Naive thymus-derived CD4-positive, alpha-beta T cell (primary cell): ENCODE measurements at regions of chr17 and their contacts with region 1.

Region 1: DNA sequence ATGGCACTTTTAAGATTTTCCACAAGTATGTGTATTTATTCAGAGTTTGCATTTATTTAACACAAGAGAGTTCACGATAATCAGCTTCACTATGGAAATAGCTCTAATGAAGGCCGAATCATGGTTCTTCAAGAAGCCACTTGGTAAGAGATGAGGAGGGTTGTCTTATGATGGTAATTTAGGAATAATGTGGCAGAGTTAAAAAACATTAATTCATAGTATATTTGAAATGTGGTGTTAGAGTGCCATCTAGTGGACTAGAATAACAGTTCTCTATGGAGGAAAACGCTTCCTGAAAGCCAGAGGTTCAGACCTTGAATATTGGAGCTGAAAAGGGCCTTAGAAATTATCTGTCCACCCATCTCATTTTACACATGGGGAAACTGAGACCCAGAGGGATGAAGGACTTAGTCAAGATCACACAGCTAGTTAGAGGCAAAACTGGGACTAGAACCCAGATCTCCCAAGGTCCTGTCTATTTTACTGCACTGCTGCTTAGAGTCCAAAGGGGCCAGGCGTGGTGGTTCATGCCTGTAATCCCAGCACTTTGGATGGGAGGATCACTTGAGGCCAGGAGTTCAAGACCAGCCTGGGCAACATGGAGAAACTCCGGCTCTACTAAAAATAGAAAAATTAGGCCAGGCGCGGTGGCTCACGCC is 33.8 kb upstream of the KPNB1 start:
- DNase-seq: peak in 7 of 9 donors; percentile 17 to 59 (median 44)
- ATAC-seq: peak; percentile 51
- H3K4me3 ChIP-seq: no peak overlapping the region
- H3K4me3 Mint-ChIP-seq: no peak overlapping the region
- H3K27ac ChIP-seq: no peak overlapping the region
- H3K27ac Mint-ChIP-seq: peak overlapping the region in 6 of 9 donors; percentile 19 to 81 (median 52)
- H3K4me1 ChIP-seq: no peaks in the 10 kb centered on the region
- H3K4me1 Mint-ChIP-seq: peaks cover 0 to 14% (median 5%) of the 10 kb centered on the region in 7 donors
- H3K27me3 ChIP-seq: no peaks in the 10 kb centered on the region
- H3K27me3 Mint-ChIP-seq: no peaks in the 10 kb centered on the region

Region 2: DNA sequence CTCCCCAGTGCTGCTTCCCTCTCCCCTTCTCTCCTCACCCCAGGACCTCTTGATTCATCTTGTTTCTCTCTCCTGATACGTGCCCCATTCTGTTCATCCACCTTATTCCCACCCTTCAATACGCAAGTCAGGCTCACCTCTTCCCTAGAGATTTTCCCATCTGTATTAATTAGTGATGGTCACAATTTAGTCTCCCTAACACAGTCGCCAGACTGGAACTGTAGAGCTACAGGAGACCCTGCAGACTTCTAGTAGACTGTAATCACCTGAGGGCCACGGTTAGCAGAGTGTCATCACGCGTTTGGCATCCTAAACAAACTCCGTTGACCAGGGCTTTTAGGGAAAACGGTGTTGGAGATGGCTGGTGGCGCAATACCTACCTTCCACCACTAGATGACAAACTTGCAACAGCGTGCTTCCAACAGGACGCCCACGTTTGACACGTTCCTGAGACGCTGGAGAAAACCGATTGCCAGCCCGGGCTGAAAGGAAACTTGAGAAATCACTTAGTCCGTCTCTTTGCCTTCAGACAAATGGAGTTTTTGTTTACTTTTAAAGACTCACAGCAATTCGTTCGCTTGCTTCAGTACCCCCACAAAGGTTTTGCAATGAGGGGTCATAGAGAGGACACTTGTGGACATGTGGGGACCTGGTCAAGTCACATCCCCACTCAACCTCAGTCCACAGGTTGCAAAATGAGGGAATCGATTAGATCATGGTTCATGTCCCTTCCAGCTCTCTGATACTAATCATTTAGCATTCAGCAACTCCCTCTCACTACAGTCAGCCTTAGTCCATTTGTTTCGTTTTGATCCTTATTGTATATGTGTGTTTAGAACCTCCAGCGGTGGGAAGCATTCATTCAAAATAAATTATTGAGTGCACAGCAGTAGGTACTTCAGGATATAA is 386.1 kb before region 1 on chr17:
- CTCF ChIA-PET with region 1: interaction called, 8 read pairs
- POLR2A ChIA-PET with region 1: no interaction called
- intact Hi-C with region 1: loop called in 1 of 2 experiments (anchors 10 kb)
- DNase-seq: peak; percentile 33 to 67 (median 61)
- ATAC-seq: peak; percentile 93
- H3K4me3 ChIP-seq: peak overlapping the region; percentile 22
- H3K4me3 Mint-ChIP-seq: peak overlapping the region; percentile 50 to 75 (median 62)
- H3K27ac ChIP-seq: no peak overlapping the region
- H3K27ac Mint-ChIP-seq: peak overlapping the region in 1 of 9 donors; percentile 32
- H3K4me1 ChIP-seq: peaks cover 0 to 3% of the 10 kb centered on the region in 2 donors
- H3K4me1 Mint-ChIP-seq: peaks cover 6 to 17% (median 11%) of the 10 kb centered on the region in 7 donors
- H3K27me3 ChIP-seq: no peaks in the 10 kb centered on the region
- H3K27me3 Mint-ChIP-seq: peaks cover 0 to 15% (median 7%) of the 10 kb centered on the region in 5 donors

Region 3: DNA sequence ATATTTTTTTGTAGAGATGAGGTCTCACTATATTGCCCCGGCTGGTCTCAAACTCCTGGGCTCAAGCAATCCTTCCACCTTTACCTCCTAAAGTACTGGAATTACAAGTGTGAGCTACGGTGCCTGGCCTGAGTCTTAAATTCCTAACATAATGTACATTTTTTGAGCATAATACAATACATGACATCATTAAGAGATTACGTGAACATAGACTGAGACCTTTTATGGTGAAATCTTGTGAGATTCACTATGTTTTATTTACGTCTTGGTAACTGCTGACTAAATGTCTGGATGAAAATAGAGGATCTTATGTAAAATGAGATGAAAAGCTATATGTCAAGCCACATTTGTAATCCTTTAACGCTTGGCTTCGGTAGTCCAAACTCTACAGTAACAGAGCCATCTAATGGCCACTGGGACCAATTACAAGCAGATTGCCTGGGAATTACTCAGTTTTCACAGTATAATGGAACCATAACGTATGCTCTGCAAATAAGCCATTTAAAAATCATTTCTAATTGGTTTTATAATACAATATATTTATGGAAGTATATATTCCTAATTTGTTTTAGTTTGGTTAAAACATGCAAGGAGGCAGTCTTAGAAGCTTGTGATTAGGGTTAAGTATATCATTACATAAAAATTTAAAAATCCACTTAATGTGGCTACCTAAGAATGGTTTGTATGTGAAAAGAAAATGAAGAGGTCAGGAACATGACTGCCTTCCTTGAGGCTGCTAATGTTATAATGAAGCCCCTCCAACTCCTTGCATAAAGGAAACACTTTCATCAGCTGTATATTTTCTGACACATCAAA is 300.2 kb before region 1 on chr17:
- CTCF ChIA-PET with region 1: interaction called, 3 read pairs
- POLR2A ChIA-PET with region 1: no interaction called
- intact Hi-C with region 1: loop called (anchors 5 kb)
- DNase-seq: peak in 7 of 9 donors; percentile 30 to 56 (median 48)
- ATAC-seq: peak; percentile 90
- H3K4me3 ChIP-seq: no peak overlapping the region
- H3K4me3 Mint-ChIP-seq: no peak overlapping the region
- H3K27ac ChIP-seq: no peak overlapping the region
- H3K27ac Mint-ChIP-seq: no peak overlapping the region
- H3K4me1 ChIP-seq: no peaks in the 10 kb centered on the region
- H3K4me1 Mint-ChIP-seq: peaks cover 0 to 3% (median 0%) of the 10 kb centered on the region in 7 donors
- H3K27me3 ChIP-seq: no peaks in the 10 kb centered on the region
- H3K27me3 Mint-ChIP-seq: peaks cover 0 to 14% (median 0%) of the 10 kb centered on the region in 5 donors

Region 4: GRCh38 chr17:47323382-47324222 is 292.3 kb before region 1 on chr17 and contains the start of gene EFCAB13:
- CTCF ChIA-PET with region 1: no interaction called
- POLR2A ChIA-PET with region 1: no interaction called
- intact Hi-C with region 1: loop called (anchors 5 kb)
- DNase-seq: peak; percentile 55 to 84 (median 73)
- ATAC-seq: peak; percentile 91
- H3K4me3 ChIP-seq: peak within 1 kb of the TSS; percentile 93
- H3K4me3 Mint-ChIP-seq: peak within 1 kb of the TSS; percentile 92 to 100 (median 98)
- H3K27ac ChIP-seq: peak within 1 kb of the TSS; percentile 76
- H3K27ac Mint-ChIP-seq: peak within 1 kb of the TSS; percentile 91 to 99 (median 98)
- H3K4me1 ChIP-seq: peaks cover 0 to 3% of the 10 kb centered on the region in 2 donors
- H3K4me1 Mint-ChIP-seq: peaks cover 13 to 26% (median 22%) of the 10 kb centered on the region in 7 donors
- H3K27me3 ChIP-seq: no peaks in the 10 kb centered on the region
- H3K27me3 Mint-ChIP-seq: peaks cover 0 to 28% (median 0%) of the 10 kb centered on the region in 5 donors
- total RNA-seq, gene EFCAB13: 3.7 to 37.4 (median 19.9) TPM

Region 5: GRCh38 chr17:47363171-47363570 is 252.7 kb before region 1 on chr17:
- CTCF ChIA-PET with region 1: interaction called, 5 read pairs
- POLR2A ChIA-PET with region 1: interaction called, 3 read pairs
- intact Hi-C with region 1: loop called (anchors 1 kb)
- DNase-seq: no peak
- ATAC-seq: no peak
- H3K4me3 ChIP-seq: no peak overlapping the region
- H3K4me3 Mint-ChIP-seq: no peak overlapping the region
- H3K27ac ChIP-seq: no peak overlapping the region
- H3K27ac Mint-ChIP-seq: no peak overlapping the region
- H3K4me1 ChIP-seq: no peaks in the 10 kb centered on the region
- H3K4me1 Mint-ChIP-seq: no peaks in the 10 kb centered on the region
- H3K27me3 ChIP-seq: no peaks in the 10 kb centered on the region
- H3K27me3 Mint-ChIP-seq: peaks cover 0 to 9% (median 0%) of the 10 kb centered on the region in 5 donors

Region 6: DNA sequence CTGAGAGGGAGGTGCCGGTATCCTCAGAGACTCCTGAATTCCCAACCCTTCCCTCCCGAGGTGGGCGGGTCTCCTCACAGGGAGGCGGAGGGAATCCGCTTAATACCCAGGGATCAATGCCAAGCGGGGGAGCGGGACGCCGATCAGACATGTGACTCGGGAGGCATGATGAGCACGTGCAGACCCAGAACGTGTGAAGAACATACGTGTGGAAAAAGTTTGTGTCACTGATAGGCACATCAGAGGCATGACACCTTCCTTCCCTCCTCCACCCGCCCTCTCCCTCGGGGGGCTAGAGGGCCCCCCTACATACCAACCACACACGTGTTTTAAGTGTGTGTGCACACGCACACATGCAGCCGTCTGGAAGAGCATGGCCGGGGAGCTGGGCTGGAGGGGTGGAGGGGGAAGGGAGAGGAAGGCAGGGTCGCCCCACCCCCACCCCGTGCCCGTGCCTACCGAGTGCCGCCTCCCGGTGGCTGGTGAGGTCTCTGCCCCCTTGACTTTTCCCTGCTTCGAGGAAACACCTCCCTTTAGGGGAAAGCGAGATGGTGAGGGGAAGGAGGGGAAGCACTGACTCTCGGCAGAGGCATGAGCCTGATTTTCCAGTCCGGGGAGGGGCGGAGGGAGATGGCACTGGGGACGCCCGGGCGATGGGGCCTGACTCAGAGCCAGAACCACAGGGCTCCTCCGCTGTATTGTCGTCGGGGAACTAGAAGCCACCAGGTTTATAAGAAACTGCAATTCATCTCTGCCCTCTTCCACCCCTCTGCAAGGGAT is 105.0 kb after region 1 on chr17:
- CTCF ChIA-PET with region 1: no interaction called
- POLR2A ChIA-PET with region 1: no interaction called
- intact Hi-C with region 1: no loop called
- DNase-seq: peak in 2 of 9 donors; percentile 69 to 93
- ATAC-seq: peak; percentile 69
- H3K4me3 ChIP-seq: peak overlapping the region; percentile 29
- H3K4me3 Mint-ChIP-seq: peak overlapping the region in 6 of 10 donors; percentile 53 to 64 (median 58)
- H3K27ac ChIP-seq: no peak overlapping the region
- H3K27ac Mint-ChIP-seq: peak overlapping the region in 5 of 9 donors; percentile 13 to 77 (median 70)
- H3K4me1 ChIP-seq: peaks cover 35 to 66% of the 10 kb centered on the region in 2 donors
- H3K4me1 Mint-ChIP-seq: peaks cover 18 to 74% (median 40%) of the 10 kb centered on the region in 7 donors
- H3K27me3 ChIP-seq: no peaks in the 10 kb centered on the region
- H3K27me3 Mint-ChIP-seq: peaks cover 0 to 7% (median under 1%) of the 10 kb centered on the region in 5 donors

Region 7: GRCh38 chr17:48333034-48333530 is 717.2 kb after region 1 on chr17:
- CTCF ChIA-PET with region 1: no interaction called
- POLR2A ChIA-PET with region 1: no interaction called
- intact Hi-C with region 1: no loop called
- DNase-seq: no peak
- ATAC-seq: no peak
- H3K4me3 ChIP-seq: no peak overlapping the region
- H3K4me3 Mint-ChIP-seq: no peak overlapping the region
- H3K27ac ChIP-seq: no peak overlapping the region
- H3K27ac Mint-ChIP-seq: no peak overlapping the region
- H3K4me1 ChIP-seq: peaks cover 0 to 3% of the 10 kb centered on the region in 2 donors
- H3K4me1 Mint-ChIP-seq: peaks cover 8 to 38% (median 28%) of the 10 kb centered on the region in 7 donors
- H3K27me3 ChIP-seq: no peaks in the 10 kb centered on the region
- H3K27me3 Mint-ChIP-seq: no peaks in the 10 kb centered on the region